Mammary epithelial cell (primary cell): ENCODE measurements at regions of chr3 and their contacts with region 1.

Region 1: DNA sequence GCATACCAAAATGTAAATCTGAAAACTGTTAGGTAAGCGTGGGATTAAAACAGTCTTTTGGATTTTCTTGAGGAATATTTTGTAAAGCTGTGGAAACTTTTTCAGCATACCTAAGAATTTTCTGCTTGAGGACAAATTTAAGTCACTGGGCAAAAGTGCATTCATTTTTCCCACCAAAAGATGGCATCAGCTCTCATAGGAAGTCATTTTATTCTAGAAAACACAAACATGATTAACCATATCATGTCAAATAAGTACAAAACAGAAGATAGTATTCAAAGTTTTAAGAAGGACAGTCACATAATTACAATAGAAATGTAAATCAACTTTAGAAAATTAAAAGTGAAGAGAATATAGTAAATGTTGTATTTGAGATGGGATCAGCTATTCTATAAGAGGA is 63.5 kb downstream of the SLC49A4 start:
- DNase-seq: peak; percentile 32
- H3K4me3 ChIP-seq: no peak overlapping the region
- H3K27ac ChIP-seq: no peak overlapping the region
- H3K4me1 ChIP-seq: no peaks in the 10 kb centered on the region
- H3K27me3 ChIP-seq: no peaks in the 10 kb centered on the region
- CTCF ChIP-seq: peak; percentile 52 to 59

Region 2: GRCh38 chr3:122921791-122922651 is 63.6 kb after region 1 on chr3:
- CTCF ChIA-PET with region 1: no interaction called
- dilution Hi-C with region 1: no loop called
- in situ Hi-C with region 1: no loop called
- intact Hi-C with region 1: loop called (anchors 5 kb)
- DNase-seq: no peak
- H3K4me3 ChIP-seq: peak overlapping the region in 2 of 3 experiments; percentile 33 to 34
- H3K27ac ChIP-seq: no peak overlapping the region
- H3K4me1 ChIP-seq: peaks cover 9% of the 10 kb centered on the region
- H3K27me3 ChIP-seq: no peaks in the 10 kb centered on the region
- CTCF ChIP-seq: peak; percentile 25 to 55

Region 3: DNA sequence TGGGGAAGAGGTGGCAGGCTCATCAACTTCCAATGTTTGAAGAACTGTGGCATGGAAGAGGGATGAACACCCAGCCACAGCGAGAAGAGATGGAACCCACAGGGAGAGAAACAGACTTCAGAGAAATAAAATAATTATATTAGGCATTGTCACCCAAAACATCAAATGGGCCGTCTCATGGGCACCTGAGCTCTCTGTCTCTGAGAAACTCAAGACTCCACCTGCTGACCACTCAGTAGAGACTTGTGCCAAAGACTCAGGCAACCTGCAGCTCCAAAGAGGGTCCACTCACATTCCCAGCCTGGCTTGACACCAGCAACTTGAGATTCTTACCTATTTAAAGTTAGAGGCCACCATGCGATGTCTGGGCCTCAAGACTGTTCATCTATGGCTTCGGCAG is 157.2 kb after region 1 on chr3:
- CTCF ChIA-PET with region 1: no interaction called
- dilution Hi-C with region 1: no loop called
- in situ Hi-C with region 1: no loop called
- intact Hi-C with region 1: loop called (anchors 1 kb)
- DNase-seq: no peak
- H3K4me3 ChIP-seq: no peak overlapping the region
- H3K27ac ChIP-seq: no peak overlapping the region
- H3K4me1 ChIP-seq: no peaks in the 10 kb centered on the region
- H3K27me3 ChIP-seq: no peaks in the 10 kb centered on the region
- CTCF ChIP-seq: no peak